ENCODE measurements at regions of chr1 and their contacts with region 1.

Region 1: GRCh38 chr1:15426492-15427279 is 11.6 kb upstream of the CTRC start:
- DNase-seq: peak in 1 of 2 donors; percentile 82
- H3K4me3 ChIP-seq: peak overlapping the region in 1 of 4 donors; percentile 0
- H3K27ac ChIP-seq: peak overlapping the region; percentile 84 to 95 (median 85)
- H3K4me1 ChIP-seq: peaks cover 45 to 81% (median 62%) of the 10 kb centered on the region in 4 donors
- H3K27me3 ChIP-seq: no peaks in the 10 kb centered on the region
- CTCF ChIP-seq: peak in 3 of 7 experiments; percentile 10 to 33 (median 15)
- EP300 ChIP-seq: no peak
- POLR2A ChIP-seq: no peak

Region 2: DNA sequence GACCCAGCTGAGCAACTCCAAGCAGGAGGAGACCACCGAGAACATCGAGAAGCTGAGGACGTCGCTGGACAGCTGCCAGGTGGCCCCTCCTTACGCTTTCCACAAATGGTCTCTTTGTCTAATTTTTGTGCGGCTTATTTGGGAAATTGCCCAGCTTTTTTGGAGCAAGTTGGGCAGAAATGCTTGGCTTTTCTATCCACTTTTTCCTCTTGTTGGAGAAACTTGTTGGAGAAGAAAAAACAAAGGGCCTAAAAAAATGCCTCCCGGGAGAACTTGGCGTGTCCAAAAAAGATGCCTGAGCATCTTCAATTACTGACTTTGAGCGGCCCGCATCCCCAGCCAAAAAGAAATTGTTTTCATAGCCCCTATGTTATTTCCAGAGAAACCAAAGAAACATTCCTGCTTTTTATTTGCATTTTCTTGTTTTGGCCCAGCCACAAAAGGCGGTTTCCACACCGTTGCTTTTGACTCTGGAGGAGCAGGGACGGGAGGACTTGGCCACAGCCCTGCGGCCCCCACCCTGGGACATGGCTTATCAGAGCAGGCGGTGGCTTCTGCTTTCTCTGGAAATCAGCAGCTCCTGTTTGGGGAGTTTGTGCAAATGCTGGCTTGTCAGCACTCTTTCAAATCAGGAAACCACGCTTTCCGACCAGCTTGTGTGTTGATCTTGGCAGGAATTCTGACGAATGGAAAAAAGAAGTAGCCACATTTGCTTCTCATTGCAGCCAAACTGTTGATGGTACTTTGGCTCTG is 98.2 kb before region 1 on chr1:
- intact Hi-C with region 1: loop called (anchors 5 kb)
- DNase-seq: peak; percentile 63 to 88
- H3K4me3 ChIP-seq: no peak overlapping the region
- H3K27ac ChIP-seq: peak overlapping the region; percentile 32 to 77 (median 70)
- H3K4me1 ChIP-seq: peaks cover 29 to 51% (median 40%) of the 10 kb centered on the region in 4 donors
- H3K27me3 ChIP-seq: no peaks in the 10 kb centered on the region
- CTCF ChIP-seq: no peak
- EP300 ChIP-seq: no peak
- POLR2A ChIP-seq: no peak